PC-9 (cell line): ENCODE measurements at regions of chr3 and their contacts with region 1.

Region 1: DNA sequence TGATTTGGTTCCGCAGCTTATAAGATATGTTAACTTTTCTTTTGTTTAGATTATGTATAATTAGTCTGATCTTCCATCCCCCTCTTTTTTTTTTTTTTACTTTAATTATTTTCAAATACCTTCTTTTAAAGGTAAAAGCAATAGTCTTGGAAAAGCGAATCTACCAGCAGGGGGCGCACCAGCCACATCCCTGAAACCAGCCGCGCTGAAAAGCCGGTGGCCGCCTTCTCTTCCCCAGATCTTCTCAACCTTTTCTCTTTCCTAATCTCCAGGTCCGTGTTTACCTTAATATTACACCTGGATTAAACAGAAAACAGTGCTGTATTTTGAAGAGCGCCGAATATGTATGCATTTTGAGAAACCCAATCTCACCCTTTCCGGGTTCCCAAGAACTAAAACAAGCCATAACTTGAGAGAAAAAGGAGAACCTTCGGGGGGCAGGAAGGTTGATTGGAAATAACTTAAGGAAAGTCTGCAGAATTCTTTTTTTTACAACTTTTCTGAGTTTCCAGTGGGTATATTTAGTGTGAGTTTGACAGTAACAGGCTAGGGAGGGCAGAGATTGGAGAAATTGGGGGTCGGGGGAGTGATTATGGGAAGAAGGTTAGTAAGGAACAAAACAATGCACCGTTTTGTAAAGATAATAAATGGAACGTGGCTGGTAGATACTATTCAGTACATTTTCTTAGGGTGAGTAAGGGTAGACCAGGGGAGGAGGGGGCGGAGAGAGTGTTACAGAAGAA is 2.0 kb upstream of the SOX2 start:
- DNase-seq: peak; percentile 48 to 86
- H3K4me3 ChIP-seq: peak overlapping the region; percentile 51
- H3K27ac ChIP-seq: no peak overlapping the region
- H3K4me1 ChIP-seq: peaks cover 20% of the 10 kb centered on the region
- H3K27me3 ChIP-seq: peaks cover 22% of the 10 kb centered on the region
- CTCF ChIP-seq: peak; percentile 97

Region 2: DNA sequence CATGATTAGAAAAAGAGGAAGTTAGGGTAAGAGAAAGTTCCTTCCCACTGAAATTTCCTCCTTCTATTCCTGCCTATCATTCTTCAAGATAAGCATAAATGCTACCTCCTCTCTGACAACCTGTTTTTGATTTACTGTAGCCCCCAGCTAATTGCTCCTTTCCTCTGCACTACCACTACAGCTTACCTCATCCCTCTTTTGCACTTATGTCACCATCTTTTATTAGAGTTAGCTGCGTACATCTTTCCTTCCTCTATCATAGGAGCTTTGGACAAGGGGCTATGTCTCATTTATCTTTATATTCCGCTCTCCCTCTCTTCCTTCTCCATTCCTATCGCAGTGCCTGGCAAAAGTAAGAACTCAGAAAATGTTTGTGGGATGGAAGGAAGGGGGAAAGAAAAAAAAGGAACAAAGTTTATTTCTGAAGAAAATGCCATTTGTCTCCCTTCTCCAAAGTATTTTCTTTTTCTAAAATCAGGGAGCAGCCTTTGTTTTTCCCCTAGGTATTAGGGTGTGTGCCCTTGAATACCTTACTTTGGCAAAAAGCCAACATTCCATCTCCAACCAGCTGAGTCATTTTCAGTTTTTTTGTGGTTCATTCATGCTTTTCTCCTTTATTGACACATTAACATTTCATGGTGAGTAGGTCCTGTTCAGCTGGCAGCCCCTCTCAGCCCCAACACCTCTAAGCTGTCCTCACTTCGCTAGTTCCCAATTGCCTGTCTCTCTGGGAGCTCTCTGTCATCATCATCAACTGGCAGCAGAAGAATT is 85.6 kb before region 1 on chr3:
- CTCF ChIA-PET with region 1: no interaction called
- POLR2A ChIA-PET with region 1: no interaction called
- intact Hi-C with region 1: no loop called
- DNase-seq: peak; percentile 70 to 81
- H3K4me3 ChIP-seq: peak overlapping the region; percentile 5; the same call in 1 of the 2 replicates
- H3K27ac ChIP-seq: peak overlapping the region; percentile 62
- H3K4me1 ChIP-seq: peaks cover 29% of the 10 kb centered on the region
- H3K27me3 ChIP-seq: no peaks in the 10 kb centered on the region
- CTCF ChIP-seq: no peak

Region 3: DNA sequence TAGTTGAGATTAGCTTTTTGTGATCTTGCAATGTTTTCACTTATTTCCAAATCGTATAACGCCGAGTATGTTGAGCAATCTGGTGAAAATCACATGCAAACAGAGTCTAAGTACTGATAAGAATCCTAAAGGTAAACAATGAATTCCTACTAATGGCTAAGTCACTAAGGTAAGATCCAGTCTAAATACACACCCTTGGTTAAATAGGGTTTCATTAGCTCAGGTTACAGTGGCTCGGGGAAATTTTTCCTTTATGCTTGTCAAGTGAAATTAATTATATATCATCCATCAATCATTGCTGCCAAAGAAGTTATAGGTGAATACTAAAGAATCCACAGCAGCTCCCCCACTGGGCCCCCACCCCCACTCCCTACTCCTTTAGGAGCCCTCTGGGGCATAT is 141.4 kb after region 1 on chr3:
- CTCF ChIA-PET with region 1: no interaction called
- POLR2A ChIA-PET with region 1: no interaction called
- intact Hi-C with region 1: loop called (anchors 5 kb)
- DNase-seq: peak; percentile 60 to 98
- H3K4me3 ChIP-seq: no peak overlapping the region; the same call in 1 of the 2 replicates
- H3K27ac ChIP-seq: peak overlapping the region; percentile 88
- H3K4me1 ChIP-seq: peaks cover 45% of the 10 kb centered on the region
- H3K27me3 ChIP-seq: no peaks in the 10 kb centered on the region
- CTCF ChIP-seq: no peak

Region 4: DNA sequence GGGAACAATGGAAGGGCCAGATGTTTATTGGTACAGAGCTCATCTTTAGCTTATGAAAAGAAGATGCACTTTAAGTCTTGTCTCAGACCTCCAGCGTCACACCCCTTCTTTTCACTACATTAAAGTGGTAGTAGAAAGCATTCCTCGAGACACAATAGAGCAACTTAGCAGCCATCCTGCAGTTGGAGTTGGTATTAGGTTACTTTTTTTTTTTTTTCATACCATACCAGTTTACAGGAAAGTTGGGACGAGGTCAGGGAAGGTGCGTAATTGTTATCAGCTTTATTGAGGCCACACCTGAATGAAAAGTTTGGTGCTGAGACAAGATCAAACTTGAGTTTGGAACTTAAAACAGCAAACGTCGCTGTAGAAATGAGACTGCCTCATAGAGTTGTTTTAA is 205.8 kb after region 1 on chr3:
- CTCF ChIA-PET with region 1: interaction called, 13 read pairs
- POLR2A ChIA-PET with region 1: no interaction called
- intact Hi-C with region 1: no loop called
- DNase-seq: no peak
- H3K4me3 ChIP-seq: no peak overlapping the region
- H3K27ac ChIP-seq: no peak overlapping the region
- H3K4me1 ChIP-seq: peaks cover 21% of the 10 kb centered on the region
- H3K27me3 ChIP-seq: no peaks in the 10 kb centered on the region
- CTCF ChIP-seq: no peak

Region 5: DNA sequence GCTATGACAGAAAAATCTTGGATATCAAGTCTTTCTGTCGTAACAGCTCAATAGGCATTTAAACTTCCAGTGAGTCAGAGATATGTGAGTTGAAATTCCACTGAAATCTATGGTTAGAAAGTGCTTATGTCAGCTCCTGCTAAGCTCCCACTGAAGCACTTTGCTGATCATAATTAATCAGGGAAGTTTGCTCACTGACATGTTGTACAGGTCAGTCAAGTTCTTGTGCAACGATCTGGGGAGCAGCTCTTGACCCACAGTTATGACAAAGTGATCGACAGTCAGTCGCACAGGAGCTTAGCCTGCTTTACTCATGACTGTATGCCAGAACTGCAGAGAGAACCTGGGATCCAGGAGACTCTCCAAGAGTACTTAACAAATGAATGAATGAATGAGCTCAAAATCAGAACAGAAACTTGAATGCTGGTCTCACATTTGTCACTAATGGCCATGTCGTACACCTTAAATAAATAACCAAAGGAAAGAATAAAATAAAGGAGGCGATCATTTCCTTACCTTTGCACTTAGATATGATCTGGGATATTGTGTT is 455.6 kb after region 1 on chr3:
- CTCF ChIA-PET with region 1: no interaction called
- POLR2A ChIA-PET with region 1: no interaction called
- intact Hi-C with region 1: loop called (anchors 2 kb)
- DNase-seq: peak; percentile 74 to 100
- H3K4me3 ChIP-seq: peak overlapping the region; percentile 25; the same call in 1 of the 2 replicates
- H3K27ac ChIP-seq: peak overlapping the region; percentile 69
- H3K4me1 ChIP-seq: peaks cover 25% of the 10 kb centered on the region
- H3K27me3 ChIP-seq: no peaks in the 10 kb centered on the region
- CTCF ChIP-seq: no peak

Region 6: GRCh38 chr3:182258538-182259177 is 549.0 kb after region 1 on chr3:
- CTCF ChIA-PET with region 1: no interaction called
- POLR2A ChIA-PET with region 1: no interaction called
- intact Hi-C with region 1: loop called (anchors 1 kb)
- DNase-seq: peak; percentile 24 to 55
- H3K4me3 ChIP-seq: no peak overlapping the region
- H3K27ac ChIP-seq: no peak overlapping the region
- H3K4me1 ChIP-seq: no peaks in the 10 kb centered on the region
- H3K27me3 ChIP-seq: no peaks in the 10 kb centered on the region
- CTCF ChIP-seq: peak; percentile 93

Region 7: DNA sequence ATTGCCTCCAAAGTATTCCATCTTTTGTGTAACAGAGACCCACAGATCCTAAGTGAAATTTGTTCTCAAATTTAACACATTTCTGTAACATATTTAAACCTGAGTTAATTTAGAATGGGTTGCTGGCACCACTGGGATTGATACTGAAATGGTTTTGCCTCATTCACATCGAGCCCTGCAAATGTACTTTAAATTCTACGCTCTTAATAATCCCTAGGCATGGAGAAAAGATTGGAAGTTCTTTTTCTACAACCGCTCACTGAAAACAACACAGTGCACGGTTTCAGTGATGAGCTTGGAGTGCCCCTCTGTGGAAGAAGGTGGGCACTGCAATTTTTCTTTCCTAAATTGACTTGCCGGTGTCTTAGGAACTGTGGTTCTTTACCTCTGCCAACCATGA is 973.7 kb after region 1 on chr3:
- CTCF ChIA-PET with region 1: interaction called, 11 read pairs
- POLR2A ChIA-PET with region 1: no interaction called
- intact Hi-C with region 1: loop called (anchors 1 kb)
- DNase-seq: peak; percentile 72 to 81
- H3K4me3 ChIP-seq: peak overlapping the region; percentile 74; the same call in 1 of the 2 replicates
- H3K27ac ChIP-seq: no peak overlapping the region
- H3K4me1 ChIP-seq: peaks cover 17% of the 10 kb centered on the region
- H3K27me3 ChIP-seq: no peaks in the 10 kb centered on the region
- CTCF ChIP-seq: peak; percentile 99